ENCODE measurements at regions of chr3 and their contacts with region 1.

Region 1: DNA sequence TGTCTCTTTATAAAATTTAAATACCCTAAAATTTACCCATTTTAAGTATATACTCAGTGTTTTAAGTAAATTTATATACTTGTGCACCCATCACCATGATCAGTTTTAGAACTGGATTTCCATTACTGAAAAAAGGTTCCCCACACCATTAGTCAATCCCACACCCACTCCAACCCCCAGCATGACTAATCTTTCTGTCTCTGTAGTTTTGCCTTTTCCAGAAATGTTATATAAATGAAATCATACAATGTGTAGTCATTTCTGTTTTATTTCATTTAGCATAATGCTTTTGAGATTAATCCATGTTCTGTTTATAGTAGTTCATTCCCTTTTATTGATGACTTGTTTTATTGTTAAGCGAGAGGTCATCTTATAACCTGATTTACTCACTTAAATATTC is 66.1 kb upstream of the LIMD1 start:
- DNase-seq: no peak
- ATAC-seq: no peak
- H3K4me3 ChIP-seq: no peak overlapping the region
- H3K27ac ChIP-seq: no peak overlapping the region
- H3K4me1 ChIP-seq: no peaks in the 10 kb centered on the region
- H3K27me3 ChIP-seq: no peaks in the 10 kb centered on the region
- CTCF ChIP-seq: no peak
- POLR2A ChIP-seq: no peak

Region 2: GRCh38 chr3:45656575-45657363 is 128.3 kb after region 1 on chr3:
- intact Hi-C with region 1: loop called in 1 of 2 experiments (anchors 10 kb)
- DNase-seq: peak; percentile 91 to 94 (median 92)
- ATAC-seq: peak; percentile 83 to 93 (median 90)
- H3K4me3 ChIP-seq: no peak overlapping the region
- H3K27ac ChIP-seq: peak overlapping the region; percentile 10 to 63 (median 28)
- H3K4me1 ChIP-seq: peaks cover 0 to 41% (median 19%) of the 10 kb centered on the region in 4 donors
- H3K27me3 ChIP-seq: no peaks in the 10 kb centered on the region
- CTCF ChIP-seq: peak; percentile 94 to 98 (median 96)
- POLR2A ChIP-seq: no peak

Measured in right lobe of liver (tissue), 6 donors.